ENCODE measurements at regions of chr11 and their contacts with region 1.

Region 1: GRCh38 chr11:14499554-14500180 is at the start of gene COPB1:
- DNase-seq: peak; percentile 82 to 94 (median 92)
- ATAC-seq: peak; percentile 99
- H3K4me3 ChIP-seq: peak within 1 kb of the TSS; percentile 70
- H3K4me3 Mint-ChIP-seq: peak within 1 kb of the TSS; percentile 79 to 98 (median 92)
- H3K27ac ChIP-seq: peak within 1 kb of the TSS; percentile 91
- H3K27ac Mint-ChIP-seq: peak within 1 kb of the TSS; percentile 87 to 98 (median 94)
- H3K4me1 ChIP-seq: peaks cover 0 to 21% of the 10 kb centered on the region in 2 donors
- H3K4me1 Mint-ChIP-seq: peaks cover 27 to 54% (median 47%) of the 10 kb centered on the region in 7 donors
- H3K27me3 ChIP-seq: no peaks in the 10 kb centered on the region
- H3K27me3 Mint-ChIP-seq: no peaks in the 10 kb centered on the region
- total RNA-seq, gene COPB1: 73.4 to 102 (median 75.9) TPM

Region 2: GRCh38 chr11:13955971-13956421 is 543.7 kb before region 1 on chr11:
- CTCF ChIA-PET with region 1: no interaction called
- POLR2A ChIA-PET with region 1: no interaction called
- intact Hi-C with region 1: no loop called
- DNase-seq: peak in 8 of 9 donors; percentile 39 to 75 (median 56)
- ATAC-seq: peak; percentile 91
- H3K4me3 ChIP-seq: no peak overlapping the region
- H3K4me3 Mint-ChIP-seq: no peak overlapping the region
- H3K27ac ChIP-seq: no peak overlapping the region
- H3K27ac Mint-ChIP-seq: no peak overlapping the region
- H3K4me1 ChIP-seq: no peaks in the 10 kb centered on the region
- H3K4me1 Mint-ChIP-seq: peaks cover 0 to 2% (median 0%) of the 10 kb centered on the region in 7 donors
- H3K27me3 ChIP-seq: no peaks in the 10 kb centered on the region
- H3K27me3 Mint-ChIP-seq: peaks cover 18 to 55% (median 22%) of the 10 kb centered on the region in 5 donors

Region 3: DNA sequence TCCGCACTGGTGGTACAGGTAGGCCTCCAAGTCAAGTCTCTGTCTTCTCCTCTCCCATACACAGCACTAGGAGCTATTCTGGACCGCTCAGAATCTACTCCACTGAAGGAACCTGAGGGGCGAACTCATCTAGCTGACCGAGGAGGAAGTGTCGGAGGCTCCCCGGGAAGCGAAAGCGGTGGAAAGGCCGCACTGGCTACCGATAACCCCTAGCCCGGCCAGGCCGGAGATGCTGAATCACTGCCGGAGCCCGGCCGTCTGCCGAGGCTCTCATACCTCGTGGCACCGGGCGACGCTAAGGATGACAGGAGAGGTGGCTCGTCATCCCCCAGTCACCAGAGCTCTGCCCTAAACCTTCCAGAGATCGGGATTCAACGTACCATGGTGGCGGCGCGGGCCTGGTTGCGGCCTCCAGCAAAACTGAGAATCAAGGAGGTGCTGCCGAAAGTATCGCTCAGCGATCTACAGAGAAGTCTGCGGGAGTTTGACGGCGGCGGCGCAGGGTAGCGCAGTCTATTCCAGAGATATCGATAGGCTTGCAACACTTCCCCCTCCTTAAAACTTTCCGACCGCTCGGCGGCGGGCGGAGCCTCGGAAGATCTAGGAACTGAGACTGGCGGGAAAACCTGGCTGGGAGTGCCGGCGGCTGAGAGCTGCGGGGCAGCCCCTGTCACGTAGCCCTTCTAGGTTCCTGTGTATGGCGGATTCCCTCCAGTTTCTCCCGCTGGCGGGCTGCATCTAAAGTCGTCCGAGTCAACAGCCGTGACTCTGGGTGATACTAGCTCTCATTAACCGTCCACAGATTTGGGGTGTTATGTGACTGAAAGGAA is 20.5 kb after region 1 on chr11 and contains the start of gene PSMA1:
- CTCF ChIA-PET with region 1: no interaction called
- POLR2A ChIA-PET with region 1: interaction called, 22 read pairs
- intact Hi-C with region 1: loop called (anchors 1 kb)
- DNase-seq: peak; percentile 72 to 95 (median 89)
- ATAC-seq: peak; percentile 96
- H3K4me3 ChIP-seq: peak within 1 kb of the TSS; percentile 70
- H3K4me3 Mint-ChIP-seq: peak within 1 kb of the TSS; percentile 86 to 99 (median 97)
- H3K27ac ChIP-seq: peak within 1 kb of the TSS; percentile 96
- H3K27ac Mint-ChIP-seq: peak within 1 kb of the TSS; percentile 93 to 99 (median 96)
- H3K4me1 ChIP-seq: peaks cover 14 to 16% of the 10 kb centered on the region in 2 donors
- H3K4me1 Mint-ChIP-seq: peaks cover 15 to 43% (median 38%) of the 10 kb centered on the region in 7 donors
- H3K27me3 ChIP-seq: no peaks in the 10 kb centered on the region
- H3K27me3 Mint-ChIP-seq: no peaks in the 10 kb centered on the region
- total RNA-seq, gene PSMA1: 103 to 253 (median 120) TPM

Region 4: DNA sequence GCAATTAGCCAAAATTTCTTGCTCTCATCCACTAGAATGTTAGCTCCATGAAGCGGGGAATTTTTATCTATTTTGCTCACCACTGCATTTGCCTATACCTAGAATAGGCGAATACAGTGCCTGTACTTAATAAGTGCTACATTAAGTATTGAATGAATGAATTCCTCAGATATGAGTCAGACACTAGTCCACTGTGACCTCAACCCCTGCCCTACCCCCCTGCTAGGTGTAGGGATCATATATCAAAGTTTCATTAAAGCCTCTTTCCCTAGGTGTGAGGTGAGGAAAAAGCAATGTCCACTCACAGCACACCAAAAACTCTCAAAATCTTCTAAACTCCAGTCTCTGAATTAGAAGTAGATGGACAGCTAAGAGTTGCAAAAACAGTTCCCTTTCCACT is 30.3 kb after region 1 on chr11:
- CTCF ChIA-PET with region 1: no interaction called
- POLR2A ChIA-PET with region 1: no interaction called
- intact Hi-C with region 1: loop called in 1 of 2 experiments (anchors 5 kb)
- DNase-seq: no peak
- ATAC-seq: no peak
- H3K4me3 ChIP-seq: no peak overlapping the region
- H3K4me3 Mint-ChIP-seq: no peak overlapping the region
- H3K27ac ChIP-seq: no peak overlapping the region
- H3K27ac Mint-ChIP-seq: no peak overlapping the region
- H3K4me1 ChIP-seq: no peaks in the 10 kb centered on the region
- H3K4me1 Mint-ChIP-seq: peaks cover 0 to 6% (median 0%) of the 10 kb centered on the region in 7 donors
- H3K27me3 ChIP-seq: no peaks in the 10 kb centered on the region
- H3K27me3 Mint-ChIP-seq: no peaks in the 10 kb centered on the region

Measured in naive thymus-derived CD4-positive, alpha-beta T cell (primary cell).